Mammary epithelial cell (primary cell): ENCODE measurements at regions of chr2 and their contacts with region 1.

Region 1: DNA sequence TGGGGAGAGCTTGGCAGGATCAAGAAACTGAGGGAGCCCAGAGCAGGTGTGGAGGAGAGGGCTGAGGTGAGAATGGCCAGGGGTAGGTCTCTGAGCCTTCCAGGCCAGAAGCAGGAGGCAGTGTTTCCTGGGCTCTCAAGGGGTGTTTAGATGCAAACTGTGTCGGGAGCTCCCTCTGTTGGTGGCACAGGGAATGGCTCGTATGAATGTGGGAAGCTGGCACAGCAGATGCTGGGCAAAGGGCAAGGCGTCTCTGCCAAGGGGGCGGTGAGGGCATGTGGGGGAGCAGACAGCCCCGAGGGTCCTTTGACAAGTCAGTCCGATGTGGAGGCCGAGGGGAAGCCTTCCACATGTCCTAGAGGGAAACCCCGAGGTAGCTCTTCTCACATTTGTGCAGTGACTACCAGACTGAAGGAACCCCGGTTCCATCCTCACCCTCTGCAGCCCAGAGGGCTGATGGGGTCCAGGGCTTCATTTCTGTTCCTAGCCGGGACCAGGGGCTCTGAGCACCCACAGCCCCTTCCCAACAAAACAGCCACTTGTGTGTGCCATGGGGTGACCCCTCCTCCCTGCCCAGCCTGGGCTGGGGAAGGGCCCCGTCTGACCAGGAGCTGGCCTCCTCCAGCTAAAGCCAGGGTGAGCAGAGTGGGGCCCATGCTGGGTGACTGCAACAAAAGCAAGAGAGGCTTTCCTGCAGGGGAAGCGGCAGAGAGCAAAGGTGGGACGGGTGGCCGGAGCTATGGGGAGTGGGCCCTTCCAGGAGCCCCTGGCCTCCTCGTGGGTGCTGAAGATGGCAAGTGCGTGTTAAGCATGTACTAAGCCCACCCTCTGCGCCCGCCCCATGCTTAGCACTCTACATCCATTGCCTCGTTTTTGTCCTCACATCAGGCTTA is 103.4 kb downstream of the SEPTIN10 start:
- DNase-seq: peak; percentile 50
- H3K4me3 ChIP-seq: no peak overlapping the region
- H3K27ac ChIP-seq: no peak overlapping the region
- H3K4me1 ChIP-seq: peaks cover 5% of the 10 kb centered on the region
- H3K27me3 ChIP-seq: no peaks in the 10 kb centered on the region
- CTCF ChIP-seq: peak; percentile 89 to 97

Region 2: DNA sequence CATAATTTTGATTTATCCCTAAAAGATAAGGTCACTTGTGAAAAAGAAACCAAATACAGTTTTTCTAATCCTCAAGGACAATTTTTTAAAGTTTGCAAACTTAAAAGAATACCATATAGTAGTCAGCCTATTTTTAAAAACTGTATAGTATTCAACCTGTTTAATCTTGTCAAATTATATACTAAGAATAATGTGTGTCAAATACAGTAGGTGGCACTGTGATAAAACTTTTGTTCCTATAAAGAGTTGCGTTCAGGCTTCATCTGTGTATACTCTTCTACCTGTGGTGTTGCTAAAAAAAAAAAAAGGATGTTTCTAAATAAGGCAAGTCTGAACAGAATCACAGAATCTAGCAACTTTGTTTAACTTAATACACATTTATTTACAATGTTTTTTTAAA is 655.2 kb before region 1 on chr2:
- CTCF ChIA-PET with region 1: interaction called, 4 read pairs
- dilution Hi-C with region 1: no loop called
- in situ Hi-C with region 1: loop called (anchors 10 to 25 kb)
- intact Hi-C with region 1: loop called (anchors 2 kb)
- DNase-seq: peak; percentile 37
- H3K4me3 ChIP-seq: no peak overlapping the region
- H3K27ac ChIP-seq: no peak overlapping the region
- H3K4me1 ChIP-seq: no peaks in the 10 kb centered on the region
- H3K27me3 ChIP-seq: no peaks in the 10 kb centered on the region
- CTCF ChIP-seq: peak; percentile 28 to 36

Region 3: GRCh38 chr2:108927936-108928659 is 582.3 kb before region 1 on chr2:
- CTCF ChIA-PET with region 1: no interaction called
- dilution Hi-C with region 1: no loop called
- in situ Hi-C with region 1: no loop called
- intact Hi-C with region 1: loop called (anchors 5 kb)
- DNase-seq: peak; percentile 45
- H3K4me3 ChIP-seq: no peak overlapping the region
- H3K27ac ChIP-seq: no peak overlapping the region
- H3K4me1 ChIP-seq: peaks cover 20% of the 10 kb centered on the region
- H3K27me3 ChIP-seq: peaks cover 11% of the 10 kb centered on the region
- CTCF ChIP-seq: peak; percentile 84 to 93

Region 4: DNA sequence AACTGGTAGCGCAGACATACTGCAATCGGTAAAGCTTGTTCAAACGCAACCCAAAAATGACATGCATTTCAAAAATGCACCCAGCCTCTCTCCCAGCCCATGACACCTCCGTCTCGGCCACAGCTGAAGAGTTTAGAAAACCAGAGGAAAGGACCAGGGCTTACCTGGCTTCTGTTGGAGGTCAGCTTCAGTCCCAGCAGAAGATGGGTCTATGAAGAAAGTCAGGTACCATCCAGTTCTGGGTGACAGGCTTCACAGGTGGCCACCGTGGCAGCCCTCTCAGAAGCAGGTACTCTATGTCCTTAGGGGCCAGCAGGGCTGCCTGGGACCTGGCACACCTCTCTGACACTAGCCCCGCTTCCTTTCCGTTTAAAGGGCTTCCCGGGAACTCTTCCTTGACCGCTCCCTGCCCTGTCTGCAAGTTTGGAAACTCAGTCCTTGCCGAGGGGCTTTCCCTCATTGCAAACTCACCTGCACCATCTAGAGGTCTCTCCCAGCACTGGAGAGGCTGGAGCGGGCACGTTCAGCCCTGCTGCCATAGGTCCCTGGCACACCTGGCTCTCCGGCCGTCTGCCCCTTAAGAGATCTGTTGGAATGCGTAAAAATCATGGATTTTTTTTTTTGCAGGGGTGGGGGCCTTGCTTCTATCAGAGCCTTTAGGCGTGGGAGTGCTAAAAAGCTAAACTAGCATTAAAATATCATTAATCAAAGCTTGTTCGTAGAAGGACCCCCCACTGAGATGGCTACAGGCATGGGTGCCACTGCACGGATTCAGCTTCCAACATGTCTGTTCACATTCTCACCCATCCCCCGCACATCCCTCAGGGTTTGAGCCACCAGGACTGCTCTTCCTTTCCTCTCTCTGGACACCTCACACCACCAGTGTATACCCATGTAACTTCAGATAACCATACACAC is 521.3 kb before region 1 on chr2 and contains the start of gene EDAR:
- CTCF ChIA-PET with region 1: interaction called, 3 read pairs
- dilution Hi-C with region 1: no loop called
- in situ Hi-C with region 1: no loop called
- intact Hi-C with region 1: loop called (anchors 10 kb)
- DNase-seq: peak; percentile 70
- H3K4me3 ChIP-seq: peak within 1 kb of the TSS; percentile 35 to 43 (median 39)
- H3K27ac ChIP-seq: no peak within 1 kb of the TSS
- H3K4me1 ChIP-seq: peaks cover 17% of the 10 kb centered on the region
- H3K27me3 ChIP-seq: no peaks in the 10 kb centered on the region
- CTCF ChIP-seq: peak; percentile 89 to 96
- total RNA-seq, gene EDAR: 0.38 to 2.2 TPM

Region 5: DNA sequence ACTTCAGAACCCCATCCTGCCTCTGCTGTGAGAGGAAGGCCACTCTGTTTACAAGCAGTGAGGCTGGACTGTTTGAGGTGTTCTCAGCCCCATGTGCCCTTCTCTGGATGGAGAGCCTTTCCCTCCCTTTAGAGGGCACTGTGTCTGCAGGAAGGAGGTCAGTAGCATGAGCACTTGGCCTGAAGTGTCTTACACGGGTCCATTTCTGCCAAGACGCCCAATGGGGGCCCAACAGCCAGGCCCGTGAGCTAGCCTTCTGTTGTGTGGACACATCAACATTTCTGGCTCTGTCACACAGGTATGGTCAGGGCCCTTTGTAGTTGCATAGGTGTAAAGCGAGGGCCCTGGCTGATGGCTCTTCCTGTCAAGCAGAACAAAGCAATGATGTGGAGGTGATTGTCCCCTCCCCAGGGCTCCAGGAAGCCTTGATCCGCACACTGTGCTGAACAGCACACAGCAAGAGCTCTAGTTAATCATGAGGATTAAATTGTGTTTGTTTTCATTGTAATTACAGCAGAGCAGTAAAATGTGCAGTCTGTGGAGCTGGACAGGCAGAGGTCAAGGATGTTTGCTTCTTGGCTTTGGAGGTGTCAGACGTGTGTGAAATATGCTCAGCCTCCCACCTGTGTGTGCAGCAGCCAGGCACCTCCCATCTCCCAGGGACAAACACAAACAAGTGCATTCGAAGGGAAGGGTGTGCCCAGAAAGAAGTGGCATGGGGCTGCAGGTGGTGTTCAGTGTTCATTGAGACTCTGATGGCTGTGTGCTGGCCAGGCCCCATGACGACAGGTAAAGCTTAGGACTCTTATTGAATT is 249.3 kb before region 1 on chr2:
- CTCF ChIA-PET with region 1: no interaction called
- dilution Hi-C with region 1: no loop called
- in situ Hi-C with region 1: no loop called
- intact Hi-C with region 1: loop called (anchors 5 kb)
- DNase-seq: peak; percentile 6
- H3K4me3 ChIP-seq: no peak overlapping the region
- H3K27ac ChIP-seq: no peak overlapping the region
- H3K4me1 ChIP-seq: no peaks in the 10 kb centered on the region
- H3K27me3 ChIP-seq: no peaks in the 10 kb centered on the region
- CTCF ChIP-seq: peak; percentile 23 to 52

Region 6: DNA sequence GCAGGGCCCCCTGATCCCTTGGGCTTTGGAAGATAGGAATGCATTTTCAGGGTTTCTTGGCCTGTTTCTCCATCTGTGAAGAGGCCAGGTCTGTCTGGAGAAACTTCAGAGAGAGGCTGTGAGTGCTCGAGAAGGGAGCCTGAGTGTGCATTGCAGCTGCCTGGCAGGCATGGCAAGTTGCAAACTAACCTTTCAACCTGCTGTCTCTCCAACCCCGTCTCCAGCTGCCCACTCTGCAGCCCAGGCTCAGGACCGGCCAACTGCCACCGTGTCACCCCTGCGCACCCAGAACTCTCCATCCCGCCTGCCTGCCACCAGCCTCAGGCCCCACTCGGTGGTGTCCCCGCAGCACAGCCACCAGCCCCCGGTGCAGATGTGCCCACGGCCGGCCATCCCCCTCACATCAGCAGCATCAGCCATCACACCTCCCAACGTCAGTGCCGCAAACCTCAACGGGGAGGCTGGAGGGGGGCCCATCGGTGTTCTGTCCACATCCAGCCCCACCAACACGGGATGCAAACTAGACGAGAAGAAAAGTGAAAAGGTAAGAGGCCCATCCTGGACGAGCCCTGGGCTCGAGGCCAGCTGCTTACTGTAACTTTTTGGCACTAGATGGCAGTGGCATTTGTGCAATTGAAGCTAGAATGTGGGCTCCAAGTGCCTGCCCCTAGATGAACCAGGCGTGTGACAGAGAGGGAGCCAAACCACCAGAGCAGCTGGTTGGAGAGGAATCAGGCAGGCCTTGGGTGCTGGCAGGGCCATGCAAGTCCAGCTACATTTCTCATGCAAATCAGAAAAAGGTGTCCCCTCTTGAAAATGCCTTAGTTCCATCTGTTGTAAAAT is 61.2 kb before region 1 on chr2:
- CTCF ChIA-PET with region 1: no interaction called
- dilution Hi-C with region 1: no loop called
- in situ Hi-C with region 1: no loop called
- intact Hi-C with region 1: loop called (anchors 2 kb)
- DNase-seq: peak; percentile 36
- H3K4me3 ChIP-seq: no peak overlapping the region
- H3K27ac ChIP-seq: no peak overlapping the region
- H3K4me1 ChIP-seq: no peaks in the 10 kb centered on the region
- H3K27me3 ChIP-seq: no peaks in the 10 kb centered on the region
- CTCF ChIP-seq: peak in 1 of 2 donors; percentile 39

Region 7: DNA sequence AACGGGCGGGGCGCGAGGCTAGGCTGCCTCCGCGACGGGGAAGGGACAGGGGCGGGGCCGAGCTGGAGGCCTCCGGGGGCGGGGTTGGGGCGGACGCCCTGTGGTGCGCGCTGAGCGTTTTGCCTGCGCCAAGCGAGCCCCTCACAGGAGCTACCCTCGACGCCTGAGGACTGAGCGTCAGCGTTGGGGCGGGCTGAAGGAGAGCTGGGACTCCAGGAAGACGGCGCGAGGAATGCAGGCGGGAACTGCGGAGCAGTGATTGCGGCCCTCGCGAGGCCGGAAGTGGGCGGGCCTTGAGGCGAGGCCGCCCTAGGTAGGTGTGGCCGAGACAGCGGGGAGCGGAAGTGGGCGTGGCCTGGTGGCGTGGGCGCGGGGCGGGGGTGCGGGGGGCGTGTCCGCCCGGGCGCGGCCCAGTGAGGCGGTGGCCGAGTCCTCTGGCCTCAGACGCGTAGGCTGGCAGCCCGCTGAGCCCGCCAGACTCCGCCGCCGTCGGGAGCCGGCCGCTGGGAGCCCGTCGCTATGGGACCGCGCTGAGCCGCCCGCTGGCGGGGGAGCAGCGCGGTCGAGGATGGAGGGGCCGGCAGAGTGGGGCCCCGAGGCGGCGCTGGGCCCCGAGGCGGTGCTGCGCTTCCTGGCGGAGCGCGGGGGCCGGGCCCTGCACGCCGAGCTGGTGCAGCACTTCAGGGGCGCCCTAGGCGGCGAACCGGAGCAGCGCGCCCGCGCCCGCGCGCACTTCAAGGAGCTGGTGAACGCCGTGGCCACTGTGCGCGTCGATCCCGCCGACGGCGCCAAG is 103.7 kb after region 1 on chr2 and contains the starts of genes SEPTIN10 and SOWAHC:
- CTCF ChIA-PET with region 1: no interaction called
- dilution Hi-C with region 1: no loop called
- in situ Hi-C with region 1: no loop called
- intact Hi-C with region 1: loop called (anchors 10 kb)
- DNase-seq: peak; percentile 99
- H3K4me3 ChIP-seq: peak within 1 kb of the TSS; percentile 75 to 99 (median 85)
- H3K27ac ChIP-seq: peak within 1 kb of the TSS; percentile 97
- H3K4me1 ChIP-seq: peaks cover 32% of the 10 kb centered on the region
- H3K27me3 ChIP-seq: no peaks in the 10 kb centered on the region
- CTCF ChIP-seq: no peak
- total RNA-seq, gene SEPTIN10: 76.4 to 133 TPM
- total RNA-seq, gene SOWAHC: 32.9 to 120 TPM